ENCODE measurements at regions of chr12 and their contacts with region 1.

Region 1: DNA sequence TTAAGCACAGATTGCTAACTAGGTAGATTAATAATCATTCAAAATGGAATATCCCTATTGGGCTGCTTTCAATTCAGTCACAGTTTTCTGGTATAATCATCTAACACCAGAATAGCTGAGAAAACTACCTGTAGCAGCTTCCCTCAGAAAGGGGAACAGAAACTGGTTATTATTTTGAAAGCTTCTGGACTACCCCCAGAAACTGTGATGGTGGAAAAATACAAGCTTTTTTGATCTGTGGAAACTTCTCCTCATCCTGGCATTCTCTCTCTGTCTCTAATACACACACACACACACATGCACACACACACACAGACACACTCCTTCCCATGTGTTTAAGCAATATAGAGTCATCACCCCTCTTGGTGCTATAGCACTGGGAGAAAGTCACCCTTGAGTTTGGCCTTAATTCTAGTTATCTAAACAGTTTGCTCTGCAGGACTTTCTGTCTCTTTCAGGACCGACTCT is 251.5 kb upstream of the LMO3 start:
- DNase-seq: no peak
- H3K4me3 ChIP-seq: no peak overlapping the region
- H3K27ac ChIP-seq: no peak overlapping the region
- H3K4me1 ChIP-seq: no peaks in the 10 kb centered on the region
- H3K27me3 ChIP-seq: no peaks in the 10 kb centered on the region
- CTCF ChIP-seq: no peak
- POLR2A ChIP-seq: no peak

Region 2: GRCh38 chr12:15910864-15911721 is 946.4 kb before region 1 on chr12 and contains the start of gene DERA:
- intact Hi-C with region 1: loop called (anchors 5 kb)
- DNase-seq: peak; percentile 59 to 74
- H3K4me3 ChIP-seq: peak within 1 kb of the TSS; percentile 71 to 76 (median 71)
- H3K27ac ChIP-seq: peak within 1 kb of the TSS; percentile 93 to 95
- H3K4me1 ChIP-seq: no peaks in the 10 kb centered on the region
- H3K27me3 ChIP-seq: no peaks in the 10 kb centered on the region
- CTCF ChIP-seq: no peak
- POLR2A ChIP-seq: peak; percentile 68
- total RNA-seq, gene DERA: 28.8 to 51.7 (median 44.2) TPM

Region 3: DNA sequence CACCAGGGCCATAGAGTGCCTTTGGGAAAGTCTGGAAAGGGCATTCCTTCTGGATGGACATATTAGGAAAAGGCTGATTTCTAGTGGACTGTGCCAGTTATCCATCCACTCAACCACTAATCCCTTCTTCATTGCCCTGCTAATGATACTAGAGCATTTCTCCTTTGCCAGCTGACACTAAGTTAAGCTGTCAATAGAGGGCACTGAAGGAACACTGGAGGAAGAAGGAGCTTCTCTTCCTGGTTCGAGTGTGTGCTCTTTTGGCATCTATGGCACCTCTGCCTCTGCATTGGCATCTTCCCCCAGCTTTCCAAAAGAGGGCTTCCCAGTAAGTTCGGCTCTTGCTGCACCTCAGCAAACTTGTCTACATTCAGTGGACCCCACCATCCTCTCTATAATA is 780.9 kb before region 1 on chr12:
- intact Hi-C with region 1: no loop called
- DNase-seq: no peak
- H3K4me3 ChIP-seq: no peak overlapping the region
- H3K27ac ChIP-seq: no peak overlapping the region
- H3K4me1 ChIP-seq: no peaks in the 10 kb centered on the region
- H3K27me3 ChIP-seq: no peaks in the 10 kb centered on the region
- CTCF ChIP-seq: peak in 1 of 3 donors; percentile 10
- POLR2A ChIP-seq: no peak

Measured in breast epithelium (tissue), 4 donors.